RWPE1 (cell line): ENCODE measurements at regions of chr13 and their contacts with region 1.

Region 1: GRCh38 chr13:42969558-42970172 is 22.4 kb downstream of the EPSTI1 start:
- DNase-seq: peak; percentile 52
- H3K27ac ChIP-seq: no peak overlapping the region
- CTCF ChIP-seq: peak; percentile 76

Region 2: DNA sequence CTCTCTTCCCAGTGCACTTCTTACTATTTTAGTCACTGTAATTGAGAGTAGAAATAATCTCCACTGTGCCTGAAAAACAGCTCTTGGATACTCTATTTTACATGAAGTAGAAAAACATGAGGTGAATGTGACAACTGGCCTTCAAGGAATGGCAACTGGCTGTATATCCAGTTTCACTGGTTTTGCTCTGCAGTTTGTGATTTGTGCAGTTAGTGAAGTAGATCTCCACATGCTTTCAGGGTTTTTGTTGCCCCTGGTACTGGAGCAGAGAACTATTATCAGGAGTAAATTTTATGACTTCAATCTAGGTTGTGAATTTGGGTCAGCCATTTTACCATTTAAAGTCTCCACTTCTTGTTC is 529.5 kb before region 1 on chr13:
- CTCF ChIA-PET with region 1: interaction called, 10 read pairs
- POLR2A ChIA-PET with region 1: no interaction called
- DNase-seq: no peak
- H3K27ac ChIP-seq: no peak overlapping the region
- CTCF ChIP-seq: no peak

Region 3: GRCh38 chr13:42702716-42703115 is 266.9 kb before region 1 on chr13:
- CTCF ChIA-PET with region 1: no interaction called
- POLR2A ChIA-PET with region 1: no interaction called
- DNase-seq: no peak
- H3K27ac ChIP-seq: no peak overlapping the region
- CTCF ChIP-seq: no peak

Region 4: GRCh38 chr13:42760951-42761350 is 208.7 kb before region 1 on chr13:
- CTCF ChIA-PET with region 1: no interaction called
- POLR2A ChIA-PET with region 1: no interaction called
- DNase-seq: no peak
- H3K27ac ChIP-seq: no peak overlapping the region
- CTCF ChIP-seq: no peak

Region 5: DNA sequence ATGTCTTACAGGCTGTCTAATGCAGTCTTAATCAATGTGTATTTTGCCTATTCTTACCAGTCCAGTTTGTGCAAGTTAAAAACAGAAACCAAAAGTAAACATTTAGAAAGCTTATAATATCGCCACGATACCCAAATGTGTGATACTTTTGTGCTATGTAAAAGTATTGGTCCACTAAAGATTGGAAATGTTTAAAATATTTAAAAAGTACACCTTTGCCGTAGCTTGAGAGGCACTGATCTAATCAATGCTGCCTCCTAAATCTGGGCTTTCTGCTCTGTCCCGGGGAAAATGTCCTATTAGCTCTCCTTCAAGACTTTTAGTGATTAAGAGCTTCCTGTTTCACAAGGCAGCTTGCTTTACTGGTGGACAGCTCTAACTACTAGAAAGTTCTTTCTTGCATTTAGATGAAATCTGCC is 118.4 kb after region 1 on chr13:
- CTCF ChIA-PET with region 1: no interaction called
- POLR2A ChIA-PET with region 1: no interaction called
- DNase-seq: peak; percentile 14
- H3K27ac ChIP-seq: no peak overlapping the region
- CTCF ChIP-seq: no peak